ENCODE measurements at regions of chr15 and their contacts with region 1.

Region 1: GRCh38 chr15:83564975-83565532 is 88.9 kb upstream of the ADAMTSL3 start:
- DNase-seq: no peak
- ATAC-seq: no peak
- H3K4me3 ChIP-seq: no peak overlapping the region
- H3K27ac ChIP-seq: no peak overlapping the region
- H3K4me1 ChIP-seq: no peaks in the 10 kb centered on the region
- CTCF ChIP-seq: no peak
- EP300 ChIP-seq: no peak
- POLR2A ChIP-seq: no peak
- RAD21 ChIP-seq: no peak

Region 2: DNA sequence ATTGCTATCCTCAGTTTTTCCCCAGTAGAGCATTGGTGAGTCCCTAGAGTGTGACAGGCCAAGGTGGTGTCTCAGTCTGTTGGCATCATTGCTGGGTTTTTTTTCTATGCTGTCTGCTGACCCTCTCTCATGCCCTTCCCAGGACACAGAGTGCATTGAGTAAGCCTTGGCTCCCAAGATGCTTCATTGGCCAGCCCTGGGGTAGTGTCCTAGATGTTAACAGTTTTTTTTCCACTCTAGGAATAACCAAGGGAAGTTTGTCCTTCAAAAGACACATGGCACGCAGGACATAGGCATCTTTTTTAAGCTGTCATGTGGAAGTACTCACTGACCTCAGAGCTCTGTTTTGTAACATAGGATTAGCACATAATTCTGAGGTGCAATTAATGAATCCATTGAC is 108.3 kb after region 1 on chr15:
- CTCF ChIA-PET with region 1: no interaction called
- POLR2A ChIA-PET with region 1: no interaction called
- DNase-seq: no peak
- ATAC-seq: peak in 1 of 2 experiments; percentile 30; a peak in 1 of 6 replicates
- H3K4me3 ChIP-seq: no peak overlapping the region
- H3K27ac ChIP-seq: no peak overlapping the region
- H3K4me1 ChIP-seq: no peaks in the 10 kb centered on the region
- CTCF ChIP-seq: no peak
- EP300 ChIP-seq: no peak
- POLR2A ChIP-seq: no peak
- RAD21 ChIP-seq: no peak

Region 3: DNA sequence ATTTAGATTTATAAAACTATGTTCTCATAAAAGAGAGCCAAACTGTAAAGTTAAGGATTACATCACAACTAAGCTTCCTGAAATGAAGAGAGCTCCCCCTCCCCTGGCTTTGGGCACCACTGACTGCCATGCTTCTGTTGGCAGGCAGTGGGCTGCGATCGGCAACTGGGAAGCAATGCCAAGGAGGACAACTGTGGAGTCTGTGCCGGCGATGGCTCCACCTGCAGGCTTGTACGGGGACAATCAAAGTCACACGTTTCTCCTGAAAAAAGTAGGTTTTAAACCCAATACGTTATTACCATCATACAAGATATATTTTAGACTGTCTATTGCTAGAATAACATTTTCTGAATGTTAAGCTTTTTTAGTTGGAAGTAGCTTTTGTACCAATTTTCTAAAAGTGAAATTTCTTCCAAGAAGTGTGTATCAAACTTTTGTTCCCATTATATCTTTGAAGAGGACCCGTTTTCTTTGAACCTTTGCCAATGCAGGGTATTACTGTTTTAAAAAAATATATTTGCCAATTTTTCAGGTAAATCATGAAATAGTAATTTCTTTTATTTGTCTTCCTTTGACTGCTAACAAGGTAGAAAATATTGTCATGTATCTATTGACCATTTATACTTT is 273.0 kb after region 1 on chr15:
- CTCF ChIA-PET with region 1: interaction called, 18 read pairs
- POLR2A ChIA-PET with region 1: no interaction called
- DNase-seq: peak; percentile 55 to 67
- ATAC-seq: peak; percentile 93 to 96
- H3K4me3 ChIP-seq: no peak overlapping the region
- H3K27ac ChIP-seq: no peak overlapping the region
- H3K4me1 ChIP-seq: no peaks in the 10 kb centered on the region
- CTCF ChIP-seq: peak; percentile 53
- EP300 ChIP-seq: no peak
- POLR2A ChIP-seq: no peak
- RAD21 ChIP-seq: peak; percentile 42 to 59; a peak in 4 of 5 replicates

Region 4: GRCh38 chr15:84035399-84035766 is 470.3 kb after region 1 on chr15:
- CTCF ChIA-PET with region 1: interaction called, 10 read pairs
- POLR2A ChIA-PET with region 1: no interaction called
- DNase-seq: peak in 1 of 2 experiments; percentile 40
- ATAC-seq: peak; percentile 64 to 86; a peak in 5 of 6 replicates
- H3K4me3 ChIP-seq: no peak overlapping the region
- H3K27ac ChIP-seq: no peak overlapping the region
- H3K4me1 ChIP-seq: no peaks in the 10 kb centered on the region
- CTCF ChIP-seq: peak; percentile 22; the same call in 1 of the 3 replicates
- EP300 ChIP-seq: no peak
- POLR2A ChIP-seq: no peak
- RAD21 ChIP-seq: peak; percentile 14 to 33; a peak in 3 of 5 replicates